Right cardiac atrium (tissue), 5 donors: ENCODE measurements at regions of chr6 and their contacts with region 1.

Region 1: DNA sequence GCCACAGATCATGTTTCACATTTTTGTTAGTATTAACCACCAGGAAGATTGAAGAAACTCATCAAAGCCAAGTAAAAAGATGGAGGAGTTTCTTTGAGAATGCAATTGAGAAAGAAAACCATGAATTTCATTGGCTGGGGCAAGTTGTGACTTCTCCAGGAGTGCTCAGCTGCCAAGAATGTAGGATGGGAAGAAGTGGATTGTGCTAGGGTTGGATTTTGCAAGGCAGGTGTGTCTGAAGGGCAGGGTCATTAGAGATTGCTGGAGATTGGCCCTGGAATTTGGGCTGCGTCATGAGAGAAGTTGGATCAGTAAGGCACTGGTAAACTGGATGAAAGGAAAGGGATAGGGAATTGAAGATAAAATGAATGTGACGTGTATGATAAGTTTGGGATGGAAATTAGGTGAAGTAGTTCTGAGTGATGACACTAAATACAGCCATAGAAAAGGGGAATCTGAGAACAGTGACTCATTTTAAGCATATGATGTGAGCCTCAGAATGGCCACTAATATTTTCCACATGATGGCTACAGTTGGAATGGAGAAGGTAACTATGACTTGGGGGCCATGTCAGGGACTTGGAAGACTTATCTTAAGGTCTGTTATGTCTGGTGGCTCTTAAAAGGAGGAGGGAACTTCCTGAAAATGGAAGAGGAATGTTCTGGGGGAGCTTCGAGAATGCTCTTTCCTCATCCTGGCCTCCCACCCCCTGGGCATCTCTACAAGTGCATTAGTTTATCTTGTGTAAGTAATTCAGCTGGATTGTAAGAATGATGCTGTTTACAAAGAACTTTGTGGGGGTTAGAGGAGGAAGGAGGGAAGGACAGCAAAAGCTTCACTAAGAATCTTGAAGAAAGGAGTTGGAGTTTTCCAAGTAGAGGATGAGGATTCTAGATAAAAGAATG is 27.8 kb upstream of the ERVFRD-1 start:
- DNase-seq: no peak
- ATAC-seq: no peak
- H3K4me3 ChIP-seq: no peak overlapping the region
- H3K27ac ChIP-seq: no peak overlapping the region
- H3K4me1 ChIP-seq: no peaks in the 10 kb centered on the region
- H3K27me3 ChIP-seq: no peaks in the 10 kb centered on the region

Region 2: GRCh38 chr6:10690651-10691445 is 448.5 kb before region 1 on chr6:
- intact Hi-C with region 1: no loop called
- DNase-seq: no peak
- ATAC-seq: no peak
- H3K4me3 ChIP-seq: no peak overlapping the region
- H3K27ac ChIP-seq: no peak overlapping the region
- H3K4me1 ChIP-seq: no peaks in the 10 kb centered on the region
- H3K27me3 ChIP-seq: no peaks in the 10 kb centered on the region

Region 3: DNA sequence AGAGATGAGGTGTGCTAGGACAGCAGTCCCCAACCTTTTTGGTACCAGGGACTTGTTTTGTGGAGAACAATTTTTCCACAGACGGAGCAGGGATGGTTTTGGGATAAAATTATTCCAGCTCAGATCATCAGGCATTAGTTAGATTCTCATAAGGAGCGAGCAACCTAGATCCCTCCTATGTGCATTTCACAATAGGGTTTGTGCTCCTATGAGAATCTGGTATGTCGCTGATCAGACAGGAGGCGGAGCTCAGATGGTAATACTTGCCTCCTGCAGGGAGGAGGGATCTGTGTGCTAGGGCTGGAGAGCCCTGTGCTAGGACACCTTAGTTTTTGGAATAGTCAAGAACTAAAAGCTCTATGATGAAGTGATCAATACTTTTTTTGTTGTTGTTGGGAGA is 43.2 kb before region 1 on chr6:
- intact Hi-C with region 1: loop called in 1 of 4 experiments (anchors 5 kb)
- DNase-seq: no peak
- ATAC-seq: no peak
- H3K4me3 ChIP-seq: no peak overlapping the region
- H3K27ac ChIP-seq: no peak overlapping the region
- H3K4me1 ChIP-seq: peaks cover 2% of the 10 kb centered on the region
- H3K27me3 ChIP-seq: no peaks in the 10 kb centered on the region